SK-N-SH (cell line): ENCODE measurements at regions of chr11 and their contacts with region 1.

Region 1: GRCh38 chr11:1832211-1832919 is 2.4 kb upstream of the SYT8 start:
- DNase-seq: peak; percentile 95
- H3K4me3 ChIP-seq: no peak overlapping the region; a peak in 1 of 4 replicates
- H3K27ac ChIP-seq: no peak overlapping the region; a peak in 1 of 4 replicates
- H3K4me1 ChIP-seq: peaks cover 6 to 65% of the 10 kb centered on the region in 2 experiments; a peak in 3 of 4 replicates
- H3K27me3 ChIP-seq: no peaks in the 10 kb centered on the region
- CTCF ChIP-seq: peak; percentile 91
- EP300 ChIP-seq: no peak
- RAD21 ChIP-seq: peak; percentile 75

Region 2: GRCh38 chr11:1358286-1358685 is 474.1 kb before region 1 on chr11:
- CTCF ChIA-PET with region 1: no interaction called
- POLR2A ChIA-PET with region 1: no interaction called
- DNase-seq: peak; percentile 50
- H3K4me3 ChIP-seq: no peak overlapping the region
- H3K27ac ChIP-seq: no peak overlapping the region
- H3K4me1 ChIP-seq: no peaks in the 10 kb centered on the region; a peak in 1 of 4 replicates
- H3K27me3 ChIP-seq: no peaks in the 10 kb centered on the region
- CTCF ChIP-seq: no peak
- EP300 ChIP-seq: no peak
- RAD21 ChIP-seq: no peak

Region 3: GRCh38 chr11:1652771-1653540 is 179.4 kb before region 1 on chr11:
- CTCF ChIA-PET with region 1: interaction called, 251 read pairs
- POLR2A ChIA-PET with region 1: no interaction called
- DNase-seq: peak; percentile 96
- H3K4me3 ChIP-seq: peak overlapping the region in 1 of 2 experiments; percentile 25; a peak in 2 of 4 replicates
- H3K27ac ChIP-seq: no peak overlapping the region
- H3K4me1 ChIP-seq: peaks cover 0 to 27% of the 10 kb centered on the region in 2 experiments; a peak in 1 of 4 replicates
- H3K27me3 ChIP-seq: no peaks in the 10 kb centered on the region
- CTCF ChIP-seq: peak; percentile 95
- EP300 ChIP-seq: no peak
- RAD21 ChIP-seq: peak; percentile 93

Region 4: DNA sequence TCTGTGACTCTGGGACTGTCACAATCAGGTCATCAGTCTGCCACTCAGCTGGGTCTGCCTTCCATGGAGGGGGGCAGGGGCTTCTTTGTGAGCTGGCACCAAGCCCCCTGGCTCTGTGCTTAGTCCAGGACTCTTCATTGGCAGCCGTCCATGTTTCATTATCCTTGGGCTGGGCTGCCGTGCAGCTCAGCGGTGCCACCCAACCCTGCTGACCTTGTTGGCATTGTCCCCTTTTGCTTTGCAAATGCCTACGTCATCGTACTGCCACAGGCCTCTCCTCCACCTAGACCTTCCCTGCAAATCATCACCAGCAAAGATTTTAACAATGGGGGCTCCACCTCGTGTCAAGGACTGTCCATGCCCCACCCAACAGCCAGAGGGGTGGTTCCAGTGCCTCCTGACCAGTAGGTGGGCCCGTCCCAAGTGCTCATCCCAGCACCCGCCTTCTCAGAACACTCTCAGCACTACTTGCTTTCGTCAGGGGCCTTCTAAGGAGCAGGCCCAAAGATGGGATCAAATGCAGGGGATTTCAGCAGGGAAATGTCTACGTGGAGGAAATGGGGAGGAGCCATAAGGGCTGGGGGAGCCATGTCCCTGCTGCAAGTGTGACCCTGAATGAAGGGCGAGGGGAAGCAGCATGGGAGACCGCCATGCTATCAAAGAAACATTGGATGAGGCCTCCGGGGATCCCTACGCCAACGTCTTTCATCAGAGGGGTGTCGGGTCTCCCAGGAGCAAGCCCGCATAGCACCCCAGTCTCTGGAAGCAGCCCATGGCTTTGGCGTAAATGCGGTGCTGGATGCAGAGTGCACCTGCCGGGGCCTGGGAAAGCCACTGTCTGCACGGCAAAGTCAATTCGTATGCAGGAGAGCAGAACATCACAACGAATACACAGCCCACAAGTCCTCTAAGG is 117.1 kb before region 1 on chr11:
- CTCF ChIA-PET with region 1: interaction called, 19 read pairs
- POLR2A ChIA-PET with region 1: no interaction called
- DNase-seq: no peak
- H3K4me3 ChIP-seq: no peak overlapping the region
- H3K27ac ChIP-seq: no peak overlapping the region
- H3K4me1 ChIP-seq: peaks cover 0 to 8% of the 10 kb centered on the region in 2 experiments; a peak in 1 of 4 replicates
- H3K27me3 ChIP-seq: no peaks in the 10 kb centered on the region; the same call in 1 of the 2 replicates
- CTCF ChIP-seq: no peak
- EP300 ChIP-seq: no peak
- RAD21 ChIP-seq: no peak

Region 5: DNA sequence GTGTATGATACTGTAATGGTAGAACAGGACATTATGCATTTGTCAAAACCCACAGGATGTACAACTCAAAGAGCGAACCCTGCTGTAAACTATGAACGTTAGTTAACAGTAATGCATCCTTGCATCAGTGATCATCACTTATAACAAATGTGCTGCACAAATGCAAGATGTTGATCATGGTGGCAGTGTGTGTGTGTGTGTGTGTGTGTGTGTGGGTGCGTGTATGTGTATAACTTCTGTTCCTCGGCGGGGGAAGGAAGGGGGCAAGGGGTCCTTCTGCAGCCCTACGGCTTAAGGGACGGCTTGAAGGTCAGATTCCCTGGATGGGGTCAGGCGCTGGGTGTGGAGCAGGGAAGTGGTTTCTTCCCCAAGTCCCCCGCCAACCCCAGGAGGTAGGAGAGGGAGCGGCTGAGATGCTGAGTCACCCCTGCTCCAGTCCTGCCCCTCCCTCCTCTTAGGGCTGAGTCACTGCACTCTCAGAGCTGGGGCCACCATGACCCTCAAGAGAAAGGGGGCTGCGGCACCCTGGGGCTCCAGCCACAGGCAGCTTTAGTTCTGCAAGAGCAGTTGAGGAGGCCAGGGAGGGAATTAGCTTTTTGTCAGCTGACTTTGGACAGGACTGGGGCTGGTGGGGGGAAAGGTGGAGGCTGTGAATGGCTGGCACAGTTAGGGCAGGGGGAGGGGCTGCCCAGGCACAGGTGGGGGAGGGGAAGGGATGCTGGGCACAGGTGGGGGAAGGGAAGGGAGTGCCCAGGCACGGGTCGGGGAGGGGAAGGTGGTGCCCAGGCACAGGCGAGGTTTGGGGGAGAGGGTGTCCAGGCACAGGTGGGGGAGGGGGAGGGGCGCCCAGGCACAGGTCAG is 59.9 kb before region 1 on chr11:
- CTCF ChIA-PET with region 1: interaction called, 16 read pairs
- POLR2A ChIA-PET with region 1: no interaction called
- DNase-seq: no peak
- H3K4me3 ChIP-seq: no peak overlapping the region
- H3K27ac ChIP-seq: peak overlapping the region; percentile 5 to 55; a peak in 3 of 4 replicates
- H3K4me1 ChIP-seq: peaks cover 4 to 12% of the 10 kb centered on the region in 2 experiments; a peak in 2 of 4 replicates
- H3K27me3 ChIP-seq: no peaks in the 10 kb centered on the region
- CTCF ChIP-seq: no peak
- EP300 ChIP-seq: peak in 1 of 2 experiments; percentile 56; a peak in 1 of 4 replicates
- RAD21 ChIP-seq: no peak

Region 6: DNA sequence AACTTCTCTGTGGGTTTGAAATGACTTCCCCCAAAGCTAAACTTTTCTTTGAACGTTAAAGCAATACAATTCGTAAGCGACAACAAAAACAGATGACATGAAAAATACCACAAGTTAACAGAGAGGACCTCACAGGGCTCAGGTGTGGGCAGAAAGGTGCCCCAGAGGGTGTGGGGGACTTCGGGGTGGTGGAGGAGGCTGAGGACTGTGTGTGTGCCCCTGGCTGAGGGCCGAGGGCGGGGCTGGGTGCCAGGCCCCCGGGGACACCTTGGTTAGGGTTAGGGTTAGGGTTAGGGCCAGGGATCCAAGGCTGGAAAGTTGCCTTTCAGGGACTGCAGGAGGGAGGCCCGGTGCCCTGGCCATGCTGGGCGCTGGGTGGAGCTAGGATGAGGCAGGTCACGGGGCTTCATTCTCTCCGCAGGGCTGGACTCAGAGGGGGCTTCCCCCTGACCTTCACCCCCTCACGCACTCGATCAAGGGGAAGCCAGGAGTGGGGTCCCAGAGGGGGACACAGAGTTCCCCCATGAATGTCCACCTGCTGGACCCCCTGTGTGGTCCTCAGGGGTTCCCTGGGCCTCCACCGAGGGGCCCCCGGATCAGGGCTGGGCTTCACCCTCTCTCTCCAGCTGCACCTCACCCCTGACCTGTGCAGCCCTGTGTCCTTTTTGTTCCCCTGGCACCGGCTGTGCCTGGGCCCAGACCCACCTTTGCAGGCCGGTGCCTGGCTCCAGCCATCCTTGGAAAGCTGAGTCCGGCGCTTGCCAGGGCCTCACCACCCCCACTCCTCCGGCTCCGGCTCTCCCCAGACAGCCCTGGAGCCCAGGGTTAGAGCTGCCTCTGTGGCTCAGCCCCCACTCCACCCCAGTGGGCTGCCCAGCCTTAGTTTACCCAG is 13.4 kb after region 1 on chr11:
- CTCF ChIA-PET with region 1: interaction called, 28 read pairs
- POLR2A ChIA-PET with region 1: interaction called, 3 read pairs
- DNase-seq: no peak
- H3K4me3 ChIP-seq: no peak overlapping the region
- H3K27ac ChIP-seq: no peak overlapping the region
- H3K4me1 ChIP-seq: peaks cover 0 to 2% of the 10 kb centered on the region in 2 experiments; a peak in 1 of 4 replicates
- H3K27me3 ChIP-seq: no peaks in the 10 kb centered on the region
- CTCF ChIP-seq: no peak
- EP300 ChIP-seq: no peak
- RAD21 ChIP-seq: no peak

Region 7: DNA sequence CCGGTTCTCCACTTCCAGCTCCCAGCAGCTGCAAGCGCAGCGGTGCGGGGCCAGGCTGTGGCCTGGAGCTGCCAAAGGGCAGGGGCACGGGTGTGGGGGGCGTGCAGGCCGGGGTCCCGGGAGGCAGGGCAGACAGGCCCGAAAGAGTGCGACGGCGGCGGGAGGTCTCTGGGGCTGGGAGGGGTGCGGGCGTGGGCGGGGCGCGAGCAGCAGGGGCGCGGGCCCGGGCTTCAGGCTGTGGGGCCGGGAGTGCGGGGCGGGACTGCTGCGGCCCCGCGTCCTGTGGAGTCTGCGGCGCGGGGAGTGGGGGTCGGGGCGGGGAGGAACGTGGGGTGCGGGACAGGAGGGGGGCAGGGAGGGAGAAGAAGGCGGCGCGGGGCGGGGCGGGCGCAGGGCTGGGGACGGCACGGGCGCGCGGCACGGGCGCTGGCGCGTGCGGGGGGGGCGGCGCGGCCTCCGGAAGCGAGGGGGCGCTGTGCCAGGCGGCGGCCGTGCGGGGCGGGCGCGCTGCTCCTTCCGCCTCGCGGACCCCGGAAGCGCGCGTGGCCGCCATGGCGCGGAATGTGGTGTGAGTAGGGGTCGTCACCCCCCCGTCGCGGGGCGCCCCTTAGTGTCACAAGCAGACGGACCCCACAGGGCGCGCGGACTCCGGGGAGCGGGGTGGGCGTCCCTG is 114.6 kb after region 1 on chr11 and contains the start of gene MRPL23:
- CTCF ChIA-PET with region 1: interaction called, 32 read pairs
- POLR2A ChIA-PET with region 1: interaction called, 5 read pairs
- DNase-seq: no peak
- H3K4me3 ChIP-seq: no peak within 1 kb of the TSS
- H3K27ac ChIP-seq: no peak within 1 kb of the TSS
- H3K4me1 ChIP-seq: peaks cover 0 to 15% of the 10 kb centered on the region in 2 experiments; a peak in 1 of 4 replicates
- H3K27me3 ChIP-seq: no peaks in the 10 kb centered on the region
- CTCF ChIP-seq: no peak
- EP300 ChIP-seq: no peak
- RAD21 ChIP-seq: no peak
- polyA plus RNA-seq, gene MRPL23: 226 and 264 TPM in 2 replicates